ENCODE measurements at regions of chr11 and their contacts with region 1.

Region 1: DNA sequence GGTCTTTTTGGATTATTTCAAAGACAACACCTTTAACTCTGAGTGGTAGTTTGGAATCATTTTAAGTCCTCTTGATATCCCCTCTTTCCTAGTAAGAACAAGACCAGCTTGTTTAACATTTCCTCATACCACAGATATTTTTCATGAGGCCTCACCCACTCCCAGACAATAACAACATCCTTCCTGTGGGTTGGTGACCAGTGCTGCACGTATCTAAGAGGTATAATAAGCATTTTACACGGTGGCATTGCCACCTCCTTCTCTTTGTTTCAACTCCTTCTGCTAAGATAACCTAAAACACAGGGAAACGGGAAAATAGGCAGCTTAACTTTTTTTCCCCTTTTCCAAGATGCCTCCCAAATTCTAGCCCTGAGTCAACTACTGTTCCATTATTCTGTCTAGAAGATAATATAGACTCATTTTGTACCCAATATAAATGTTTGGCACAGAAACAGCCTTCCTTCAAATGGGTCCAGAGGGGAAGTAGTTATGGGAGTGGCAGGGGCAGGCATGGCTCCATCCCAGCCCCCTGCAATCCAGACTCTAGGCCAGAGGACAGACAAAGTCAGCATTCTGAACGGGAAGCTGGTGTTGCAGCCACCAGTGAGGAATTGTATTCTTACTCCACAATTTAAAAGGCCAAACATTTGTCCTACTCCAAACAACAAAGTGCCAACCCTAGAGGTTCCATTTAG is 28.5 kb downstream of the MAML2 start:
- DNase-seq: peak; percentile 94
- ATAC-seq: peak; percentile 78
- H3K4me3 ChIP-seq: peak overlapping the region; percentile 30
- H3K27ac ChIP-seq: peak overlapping the region; percentile 82
- H3K4me1 ChIP-seq: peaks cover 66% of the 10 kb centered on the region
- H3K27me3 ChIP-seq: no peaks in the 10 kb centered on the region
- CTCF ChIP-seq: no peak

Region 2: GRCh38 chr11:96112201-96113128 is 202.0 kb before region 1 on chr11:
- CTCF ChIA-PET with region 1: no interaction called
- POLR2A ChIA-PET with region 1: interaction called, 13 read pairs
- intact Hi-C with region 1: no loop called
- DNase-seq: no peak
- ATAC-seq: no peak
- H3K4me3 ChIP-seq: no peak overlapping the region
- H3K27ac ChIP-seq: no peak overlapping the region
- H3K4me1 ChIP-seq: no peaks in the 10 kb centered on the region
- H3K27me3 ChIP-seq: no peaks in the 10 kb centered on the region
- CTCF ChIP-seq: no peak

Region 3: DNA sequence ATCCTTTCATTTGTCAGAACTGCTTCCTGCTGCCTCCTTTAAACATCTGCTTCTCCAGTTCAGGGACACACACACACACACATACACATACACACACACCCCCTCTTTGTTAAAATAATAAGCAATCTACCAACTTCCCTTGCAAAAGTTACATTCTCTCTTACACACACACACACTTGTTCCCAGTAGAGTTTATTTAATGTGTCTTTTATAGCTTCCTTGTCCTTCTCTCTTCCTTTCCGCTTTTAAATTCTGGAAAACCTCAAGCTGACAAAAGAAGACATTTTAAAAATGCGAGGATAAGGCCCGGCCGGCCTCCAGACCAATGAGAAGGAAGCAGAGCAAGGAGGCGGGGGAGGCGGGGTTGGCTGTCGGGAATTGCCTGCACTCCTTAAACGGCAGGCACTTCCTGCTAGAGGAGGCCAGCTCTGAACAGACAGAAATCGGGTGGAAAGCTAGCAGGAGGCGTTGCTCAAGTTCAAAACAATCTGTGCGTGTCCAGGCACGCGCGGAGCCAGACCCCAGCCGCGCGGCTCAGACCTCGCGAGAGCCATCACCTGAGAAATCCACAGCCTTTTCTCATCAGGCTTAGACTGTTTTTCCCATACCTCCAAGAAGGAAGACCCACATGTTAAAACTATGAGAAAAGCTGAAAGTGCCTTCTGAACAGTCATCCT is 71.4 kb before region 1 on chr11:
- CTCF ChIA-PET with region 1: no interaction called
- POLR2A ChIA-PET with region 1: interaction called, 4 read pairs
- intact Hi-C with region 1: loop called (anchors 2 kb)
- DNase-seq: peak; percentile 95
- ATAC-seq: peak; percentile 97
- H3K4me3 ChIP-seq: peak overlapping the region; percentile 58
- H3K27ac ChIP-seq: peak overlapping the region; percentile 80
- H3K4me1 ChIP-seq: peaks cover 43% of the 10 kb centered on the region
- H3K27me3 ChIP-seq: no peaks in the 10 kb centered on the region
- CTCF ChIP-seq: no peak

Region 4: DNA sequence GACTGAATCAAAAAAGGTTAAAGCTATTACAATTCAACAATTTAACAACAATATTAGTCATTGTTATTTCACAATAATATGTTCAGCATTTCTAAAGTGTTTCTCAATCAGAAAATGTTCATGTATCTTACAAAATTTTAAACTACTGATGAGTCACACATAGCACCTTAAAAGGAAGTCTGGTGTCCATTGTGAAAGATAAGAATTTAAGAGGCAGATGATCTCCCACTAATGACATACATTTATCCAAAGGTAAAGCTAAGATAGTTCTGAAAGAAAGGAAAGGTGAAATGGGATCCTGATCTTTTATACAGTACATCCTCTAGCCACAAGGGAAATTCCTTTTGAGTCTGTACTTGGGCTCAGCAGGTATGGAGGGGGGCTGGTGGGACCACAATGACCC is 51.1 kb before region 1 on chr11:
- CTCF ChIA-PET with region 1: no interaction called
- POLR2A ChIA-PET with region 1: no interaction called
- intact Hi-C with region 1: loop called (anchors 5 kb)
- DNase-seq: peak; percentile 89
- ATAC-seq: peak; percentile 8
- H3K4me3 ChIP-seq: no peak overlapping the region
- H3K27ac ChIP-seq: peak overlapping the region; percentile 25
- H3K4me1 ChIP-seq: peaks cover 53% of the 10 kb centered on the region
- H3K27me3 ChIP-seq: no peaks in the 10 kb centered on the region
- CTCF ChIP-seq: no peak

Region 5: GRCh38 chr11:96279018-96279895 is 35.2 kb before region 1 on chr11:
- CTCF ChIA-PET with region 1: no interaction called
- POLR2A ChIA-PET with region 1: no interaction called
- intact Hi-C with region 1: no loop called
- DNase-seq: peak; percentile 84
- ATAC-seq: peak; percentile 96
- H3K4me3 ChIP-seq: no peak overlapping the region
- H3K27ac ChIP-seq: peak overlapping the region; percentile 55
- H3K4me1 ChIP-seq: peaks cover 29% of the 10 kb centered on the region
- H3K27me3 ChIP-seq: no peaks in the 10 kb centered on the region
- CTCF ChIP-seq: no peak

Region 6: DNA sequence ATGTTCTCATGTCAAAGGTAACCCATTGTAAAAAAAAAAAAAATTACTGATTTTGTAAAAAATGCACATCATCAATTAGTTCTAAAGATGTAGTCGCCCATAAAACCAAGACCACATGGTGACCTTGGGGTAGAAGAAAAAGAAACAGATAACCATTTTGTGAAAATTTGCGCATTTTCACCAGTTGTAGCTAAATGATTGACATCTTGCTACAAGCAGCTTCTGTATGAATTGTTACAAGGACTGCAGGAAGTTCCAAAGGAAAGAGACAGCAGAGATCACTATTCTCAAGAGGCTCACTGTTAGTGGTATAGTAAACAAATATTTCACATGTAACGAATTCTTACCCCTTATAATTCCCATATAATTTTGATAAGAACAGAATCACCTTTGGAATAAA is 20.2 kb before region 1 on chr11:
- CTCF ChIA-PET with region 1: no interaction called
- POLR2A ChIA-PET with region 1: no interaction called
- intact Hi-C with region 1: no loop called
- DNase-seq: no peak
- ATAC-seq: no peak
- H3K4me3 ChIP-seq: no peak overlapping the region
- H3K27ac ChIP-seq: no peak overlapping the region
- H3K4me1 ChIP-seq: no peaks in the 10 kb centered on the region
- H3K27me3 ChIP-seq: no peaks in the 10 kb centered on the region
- CTCF ChIP-seq: no peak

Measured in PC-3 (cell line).